ENCODE measurements at regions of chr5 and their contacts with region 1.

Region 1: GRCh38 chr5:90783460-90784333 is 225.1 kb downstream of the ADGRV1 start:
- DNase-seq: peak; percentile 59
- H3K4me3 ChIP-seq: no peak overlapping the region
- H3K27ac ChIP-seq: no peak overlapping the region
- H3K4me1 ChIP-seq: no peaks in the 10 kb centered on the region
- CTCF ChIP-seq: peak; percentile 95

Region 2: DNA sequence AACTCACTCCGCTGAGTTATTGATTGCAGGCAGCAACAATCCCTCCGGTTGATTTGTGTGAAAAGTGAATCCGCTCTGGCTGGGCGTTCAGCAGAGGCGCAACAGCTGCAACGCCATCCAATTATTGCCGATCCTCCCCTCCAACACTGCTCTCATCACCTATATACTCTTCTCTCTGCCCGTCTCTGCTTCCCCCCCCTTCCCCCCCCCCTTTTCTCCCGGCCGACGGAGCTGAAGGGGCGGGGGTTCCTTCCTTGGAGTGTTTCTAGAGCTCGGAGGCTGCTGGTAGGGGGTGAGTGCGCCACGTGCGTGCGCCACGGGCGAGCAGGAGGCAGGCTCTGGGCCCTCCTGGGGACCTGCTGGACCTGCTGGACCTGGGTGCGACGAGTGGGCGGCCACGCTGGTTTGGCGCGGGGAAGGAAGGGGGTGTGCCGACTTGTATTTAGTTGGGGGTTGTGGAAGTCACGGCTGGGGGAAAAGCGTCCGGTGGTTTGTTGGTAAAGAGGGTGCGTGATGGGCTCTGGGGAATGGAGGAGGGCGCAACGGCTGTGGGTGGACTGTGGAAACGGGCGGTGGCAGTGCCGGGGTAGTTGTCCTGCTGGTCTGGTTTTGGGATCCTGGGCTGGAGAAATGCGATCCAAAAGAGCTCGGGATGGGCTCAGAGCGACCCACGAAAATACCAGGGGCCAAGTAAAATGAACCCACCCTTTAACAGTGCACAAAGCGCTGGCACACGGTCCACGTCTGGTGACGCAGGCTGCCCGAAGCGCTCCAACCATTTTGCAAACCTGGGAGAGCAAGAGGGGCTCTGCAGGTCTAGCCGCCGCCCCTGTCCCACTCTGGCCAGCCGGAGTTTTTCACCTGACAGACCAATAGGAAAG is 1894.3 kb before region 1 on chr5:
- CTCF ChIA-PET with region 1: no interaction called
- POLR2A ChIA-PET with region 1: no interaction called
- intact Hi-C with region 1: no loop called
- DNase-seq: no peak
- H3K4me3 ChIP-seq: peak overlapping the region; percentile 57
- H3K27ac ChIP-seq: no peak overlapping the region
- H3K4me1 ChIP-seq: peaks cover 12% of the 10 kb centered on the region
- CTCF ChIP-seq: no peak

Region 3: DNA sequence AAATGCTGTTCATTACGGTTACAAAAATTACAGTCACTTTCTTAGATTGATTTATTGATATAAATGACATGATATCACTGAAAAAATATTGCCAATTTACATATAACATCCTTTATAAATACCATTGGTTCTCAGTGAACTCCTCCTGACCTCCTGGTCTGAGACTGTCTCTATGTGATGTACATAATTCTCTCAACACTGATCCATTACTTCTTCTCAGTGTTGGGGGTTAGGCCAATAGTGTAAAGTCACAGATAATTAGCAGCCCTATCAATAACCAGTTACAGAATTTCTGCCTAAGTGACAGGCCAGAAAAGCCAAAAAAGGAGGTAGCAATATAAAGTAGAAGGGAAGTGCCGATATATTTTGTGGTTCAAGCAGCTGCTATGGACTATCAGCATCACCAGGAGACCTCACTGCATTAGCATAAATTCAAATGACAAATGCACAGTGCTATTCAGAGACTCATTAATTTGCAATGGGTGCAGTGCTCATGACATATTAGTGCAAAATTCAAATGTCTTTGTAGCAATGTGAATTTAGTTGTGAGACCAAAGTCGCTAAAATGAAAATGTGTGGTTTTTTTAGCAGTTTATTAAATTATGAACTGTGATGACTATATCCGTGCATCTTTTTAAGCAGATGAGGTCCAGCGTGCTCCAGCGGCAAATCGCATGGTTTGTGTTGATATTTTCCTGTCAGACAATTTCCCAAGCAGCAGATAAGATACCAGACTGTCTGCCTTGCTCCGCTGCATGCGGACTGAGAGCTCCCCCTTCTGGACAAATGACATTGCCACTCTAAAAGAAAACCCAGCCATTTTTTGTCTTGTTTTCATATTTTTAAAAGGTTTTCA is 518.8 kb before region 1 on chr5:
- CTCF ChIA-PET with region 1: no interaction called
- POLR2A ChIA-PET with region 1: no interaction called
- intact Hi-C with region 1: loop called (anchors 10 kb)
- DNase-seq: peak; percentile 64
- H3K4me3 ChIP-seq: no peak overlapping the region
- H3K27ac ChIP-seq: no peak overlapping the region
- H3K4me1 ChIP-seq: no peaks in the 10 kb centered on the region
- CTCF ChIP-seq: peak; percentile 99

Region 4: GRCh38 chr5:90406466-90406865 is 377.2 kb before region 1 on chr5:
- CTCF ChIA-PET with region 1: no interaction called
- POLR2A ChIA-PET with region 1: no interaction called
- intact Hi-C with region 1: no loop called
- DNase-seq: no peak
- H3K4me3 ChIP-seq: no peak overlapping the region
- H3K27ac ChIP-seq: no peak overlapping the region
- H3K4me1 ChIP-seq: peaks cover 29% of the 10 kb centered on the region
- CTCF ChIP-seq: no peak

Region 5: DNA sequence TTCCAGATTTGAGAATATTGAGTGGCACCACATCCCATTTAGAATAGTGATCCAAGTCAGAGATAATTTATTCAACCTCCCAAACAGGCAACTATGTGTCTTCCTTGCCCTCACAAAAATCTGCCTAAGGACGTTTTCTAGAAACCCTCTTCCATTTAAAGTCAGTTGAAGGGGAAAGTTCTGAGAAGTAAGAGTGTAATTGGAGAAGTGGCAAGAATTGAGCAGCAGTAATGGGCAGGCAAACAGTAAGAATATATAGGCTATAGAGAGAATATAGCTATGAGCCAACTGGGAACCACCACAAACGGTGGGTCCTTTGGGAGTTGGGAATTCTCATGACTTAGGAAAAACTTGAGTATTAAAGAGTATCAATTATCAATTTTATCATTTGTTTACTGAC is 343.1 kb before region 1 on chr5:
- CTCF ChIA-PET with region 1: no interaction called
- POLR2A ChIA-PET with region 1: interaction called, 3 read pairs
- intact Hi-C with region 1: loop called (anchors 1 kb)
- DNase-seq: no peak
- H3K4me3 ChIP-seq: no peak overlapping the region
- H3K27ac ChIP-seq: no peak overlapping the region
- H3K4me1 ChIP-seq: no peaks in the 10 kb centered on the region
- CTCF ChIP-seq: no peak

Region 6: GRCh38 chr5:90709323-90710155 is 74.2 kb before region 1 on chr5:
- CTCF ChIA-PET with region 1: no interaction called
- POLR2A ChIA-PET with region 1: no interaction called
- intact Hi-C with region 1: loop called (anchors 2 kb)
- DNase-seq: peak; percentile 6
- H3K4me3 ChIP-seq: no peak overlapping the region
- H3K27ac ChIP-seq: no peak overlapping the region
- H3K4me1 ChIP-seq: no peaks in the 10 kb centered on the region
- CTCF ChIP-seq: peak; percentile 79